ENCODE measurements at regions of chr16 and their contacts with region 1.

Region 1: GRCh38 chr16:88920618-88921590 is 54.4 kb upstream of the PABPN1L start:
- DNase-seq: peak; percentile 87
- ATAC-seq: peak; percentile 86

Region 2: GRCh38 chr16:88886845-88887521 is 33.9 kb before region 1 on chr16:
- intact Hi-C with region 1: loop called (anchors 2 kb)
- DNase-seq: peak; percentile 95
- ATAC-seq: peak; percentile 82

Region 3: GRCh38 chr16:88977018-88977811 is 56.3 kb after region 1 on chr16 and contains the start of gene CBFA2T3:
- intact Hi-C with region 1: no loop called
- DNase-seq: peak; percentile 94
- ATAC-seq: peak; percentile 89
- total RNA-seq, gene CBFA2T3: 11.1 TPM

Measured in Right ventricle myocardium inferior (tissue), 1 donor.